Gastrocnemius medialis (tissue), 4 donors: ENCODE measurements at regions of chr17 and their contacts with region 1.

Region 1: DNA sequence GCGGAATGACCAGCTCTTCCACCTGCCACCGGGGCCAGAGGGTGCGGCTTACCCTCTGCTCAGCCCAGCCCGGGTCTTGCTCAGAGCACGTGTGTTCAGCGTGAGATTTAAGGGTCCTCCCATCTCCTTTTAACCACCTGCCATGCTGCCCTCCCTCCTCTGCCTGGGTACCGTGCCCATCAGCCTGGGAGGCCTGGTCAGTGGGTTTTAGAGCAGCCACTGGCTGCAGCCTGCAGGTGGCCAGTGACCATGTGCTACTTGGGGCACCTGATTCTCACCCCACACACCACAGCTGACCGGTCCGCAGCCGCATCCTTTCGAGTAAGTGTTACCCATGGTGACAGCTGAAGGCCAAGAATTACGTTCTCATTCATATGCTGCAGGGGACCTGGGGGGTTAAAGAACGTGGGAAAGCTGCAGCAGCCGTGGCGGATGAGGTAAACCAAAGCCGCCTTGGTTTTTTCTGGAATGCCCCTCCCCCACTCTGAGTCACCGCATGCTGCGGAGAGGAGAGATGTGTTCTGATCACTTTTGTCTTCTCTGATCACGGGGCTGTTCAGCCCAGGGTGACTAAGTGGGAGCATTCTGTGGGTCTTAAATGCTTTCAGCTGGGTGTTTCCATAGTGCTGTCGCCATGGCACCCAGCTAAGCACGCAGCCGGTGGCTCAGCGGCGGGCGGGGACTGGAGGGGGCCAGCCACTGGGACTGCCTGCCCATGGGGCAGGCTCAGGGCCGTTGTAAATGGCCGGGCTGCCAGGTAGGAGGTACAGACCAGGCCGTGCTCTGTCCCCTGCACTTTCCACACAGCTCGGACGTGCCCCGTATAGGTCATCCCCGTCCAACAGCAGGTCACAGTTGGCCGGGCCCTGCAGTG is 59.8 kb downstream of the BAIAP2 start:
- DNase-seq: peak; percentile 44 to 68
- ATAC-seq: peak; percentile 53 to 79
- H3K4me3 ChIP-seq: peak overlapping the region in 3 of 4 donors; percentile 5 to 7 (median 5)
- H3K27ac ChIP-seq: peak overlapping the region in 2 of 4 donors; percentile 49 to 65
- H3K4me1 ChIP-seq: peaks cover 25 to 32% of the 10 kb centered on the region in 2 donors
- H3K27me3 ChIP-seq: no peaks in the 10 kb centered on the region
- CTCF ChIP-seq: no peak
- POLR2A ChIP-seq: no peak

Region 2: DNA sequence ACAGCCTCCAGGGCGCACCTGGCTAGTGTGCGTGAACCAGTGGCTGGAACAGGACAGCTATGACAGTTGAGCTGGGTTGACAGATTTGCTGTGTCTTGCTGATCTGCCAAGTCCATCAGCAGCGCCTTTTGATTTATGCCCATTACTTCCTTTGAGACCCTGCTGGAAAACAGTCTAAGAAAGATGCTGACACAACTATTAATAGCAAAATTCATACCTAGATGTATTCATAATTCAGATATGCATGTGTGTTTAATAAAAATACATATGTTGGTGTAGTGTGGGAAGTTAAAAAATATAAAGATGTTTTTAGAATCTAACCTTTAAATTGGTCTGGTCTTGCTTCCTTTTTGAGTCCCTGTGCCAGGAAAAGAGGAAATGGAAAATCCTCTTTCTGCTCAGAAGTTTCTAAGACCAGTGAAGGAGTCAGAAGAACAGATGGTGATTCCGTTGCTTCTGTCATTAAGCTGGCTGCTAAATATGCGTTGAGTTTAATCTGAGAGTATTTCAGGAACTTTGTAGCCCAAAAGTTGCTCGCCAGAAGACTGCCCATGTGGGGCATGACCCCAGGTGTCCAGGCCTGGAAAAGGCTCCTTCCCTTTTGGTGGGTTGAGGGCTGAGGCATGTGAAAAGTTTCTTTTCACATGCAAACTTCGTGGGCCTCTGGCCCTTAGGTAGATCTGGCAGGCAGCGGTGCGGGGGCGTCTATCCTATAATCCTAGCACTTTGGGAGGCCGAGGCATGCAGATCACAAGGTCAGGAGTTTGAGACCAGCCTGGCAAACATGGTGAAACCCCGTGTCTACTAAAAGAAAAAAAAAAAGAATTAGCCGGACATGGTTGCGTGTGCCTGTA is 719.8 kb before region 1 on chr17:
- in situ Hi-C with region 1: no loop called
- intact Hi-C with region 1: no loop called
- DNase-seq: no peak
- ATAC-seq: no peak
- H3K4me3 ChIP-seq: no peak overlapping the region
- H3K27ac ChIP-seq: no peak overlapping the region
- H3K4me1 ChIP-seq: no peaks in the 10 kb centered on the region
- H3K27me3 ChIP-seq: no peaks in the 10 kb centered on the region
- CTCF ChIP-seq: no peak
- POLR2A ChIP-seq: no peak

Region 3: GRCh38 chr17:81018044-81018802 is 76.5 kb before region 1 on chr17:
- in situ Hi-C with region 1: loop called in 2 of 4 experiments (anchors 5 to 10 kb)
- intact Hi-C with region 1: no loop called
- DNase-seq: no peak
- ATAC-seq: peak; percentile 45 to 55
- H3K4me3 ChIP-seq: peak overlapping the region; percentile 29 to 43 (median 34)
- H3K27ac ChIP-seq: peak overlapping the region; percentile 64 to 79 (median 70)
- H3K4me1 ChIP-seq: peaks cover 45 to 46% of the 10 kb centered on the region in 2 donors
- H3K27me3 ChIP-seq: no peaks in the 10 kb centered on the region
- CTCF ChIP-seq: no peak
- POLR2A ChIP-seq: peak in 1 of 2 donors; percentile 18

Region 4: GRCh38 chr17:81025741-81026129 is 69.0 kb before region 1 on chr17:
- in situ Hi-C with region 1: loop called in 1 of 4 experiments (anchors 10 kb)
- intact Hi-C with region 1: loop called (anchors 1 kb)
- DNase-seq: no peak
- ATAC-seq: no peak
- H3K4me3 ChIP-seq: no peak overlapping the region
- H3K27ac ChIP-seq: no peak overlapping the region
- H3K4me1 ChIP-seq: peaks cover 27 to 41% of the 10 kb centered on the region in 2 donors
- H3K27me3 ChIP-seq: peaks cover 35 to 46% (median 41%) of the 10 kb centered on the region in 3 donors
- CTCF ChIP-seq: no peak
- POLR2A ChIP-seq: no peak